Mammary epithelial cell (primary cell): ENCODE measurements at regions of chr2 and their contacts with region 1.

Region 1: GRCh38 chr2:735670-736582 is 58.7 kb upstream of the TMEM18 start:
- DNase-seq: no peak
- H3K4me3 ChIP-seq: no peak overlapping the region
- H3K27ac ChIP-seq: no peak overlapping the region
- H3K4me1 ChIP-seq: peaks cover 6% of the 10 kb centered on the region
- H3K27me3 ChIP-seq: no peaks in the 10 kb centered on the region
- CTCF ChIP-seq: no peak

Region 2: GRCh38 chr2:794554-795241 is 58.8 kb after region 1 on chr2:
- CTCF ChIA-PET with region 1: no interaction called
- dilution Hi-C with region 1: loop called (anchors 5 kb)
- in situ Hi-C with region 1: no loop called
- intact Hi-C with region 1: no loop called
- DNase-seq: no peak
- H3K4me3 ChIP-seq: no peak overlapping the region
- H3K27ac ChIP-seq: no peak overlapping the region
- H3K4me1 ChIP-seq: no peaks in the 10 kb centered on the region
- H3K27me3 ChIP-seq: no peaks in the 10 kb centered on the region
- CTCF ChIP-seq: no peak